Heart left ventricle (tissue), 16 donors: ENCODE measurements at regions of chr7 and their contacts with region 1.

Region 1: DNA sequence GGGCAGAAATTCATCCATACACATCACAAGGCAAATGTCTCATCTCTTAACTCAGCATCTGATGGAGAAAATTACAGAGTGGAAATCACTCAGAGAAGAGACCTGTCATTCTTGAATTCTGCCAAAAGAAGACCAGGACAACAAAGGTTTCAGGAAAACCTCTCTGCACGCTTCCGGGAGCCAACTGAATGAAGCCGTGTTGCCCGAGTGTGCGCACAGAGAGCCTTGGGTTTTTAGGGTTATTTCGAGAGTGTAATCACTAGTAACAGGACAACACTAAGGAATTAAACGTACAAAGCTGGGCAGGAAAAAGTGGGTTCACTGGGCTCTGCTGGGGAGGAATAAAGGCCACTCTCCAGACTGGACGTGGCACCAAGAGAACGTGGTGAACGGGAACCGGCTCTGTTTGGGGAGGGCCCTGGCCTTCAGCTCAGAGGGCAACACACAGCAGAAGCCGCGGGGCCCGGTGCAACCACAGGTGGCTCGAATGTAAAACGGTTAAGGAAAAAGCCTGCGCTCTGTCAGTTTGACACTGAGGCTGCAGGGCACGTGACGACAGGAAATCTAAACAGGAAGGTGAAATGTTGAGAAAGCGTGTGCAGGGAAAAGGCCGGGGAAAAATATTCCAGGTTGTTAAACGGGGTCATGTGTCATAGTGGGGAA is 331.5 kb downstream of the DNAJB6 start:
- DNase-seq: no peak
- ATAC-seq: no peak
- H3K4me3 ChIP-seq: no peak overlapping the region
- H3K27ac ChIP-seq: no peak overlapping the region
- H3K4me1 ChIP-seq: peaks cover 0 to under 1% (median 0%) of the 10 kb centered on the region in 12 donors
- H3K27me3 ChIP-seq: peaks cover 0 to 31% (median 3%) of the 10 kb centered on the region in 9 donors
- CTCF ChIP-seq: no peak
- POLR2A ChIP-seq: no peak

Region 2: GRCh38 chr7:157576440-157576886 is 91.9 kb before region 1 on chr7:
- intact Hi-C with region 1: no loop called
- DNase-seq: peak in 3 of 5 donors; percentile 30 to 65 (median 35)
- ATAC-seq: peak in 2 of 4 donors; percentile 53 to 89
- H3K4me3 ChIP-seq: peak overlapping the region in 6 of 12 donors; percentile 8 to 33 (median 14)
- H3K27ac ChIP-seq: no peak overlapping the region
- H3K4me1 ChIP-seq: no peaks in the 10 kb centered on the region
- H3K27me3 ChIP-seq: peaks cover 0 to 20% (median 0%) of the 10 kb centered on the region in 9 donors
- CTCF ChIP-seq: no peak
- POLR2A ChIP-seq: no peak

Region 3: GRCh38 chr7:157616426-157616825 is 51.9 kb before region 1 on chr7:
- intact Hi-C with region 1: loop called in 1 of 10 experiments (anchors 2 kb)
- DNase-seq: no peak
- ATAC-seq: no peak
- H3K4me3 ChIP-seq: no peak overlapping the region
- H3K27ac ChIP-seq: peak overlapping the region in 3 of 12 donors; percentile 60 to 73 (median 61)
- H3K4me1 ChIP-seq: peaks cover 0 to 32% (median 7%) of the 10 kb centered on the region in 12 donors
- H3K27me3 ChIP-seq: peaks cover 0 to 34% (median 8%) of the 10 kb centered on the region in 9 donors
- CTCF ChIP-seq: no peak
- POLR2A ChIP-seq: no peak